ENCODE measurements at regions of chr12 and their contacts with region 1.

Region 1: DNA sequence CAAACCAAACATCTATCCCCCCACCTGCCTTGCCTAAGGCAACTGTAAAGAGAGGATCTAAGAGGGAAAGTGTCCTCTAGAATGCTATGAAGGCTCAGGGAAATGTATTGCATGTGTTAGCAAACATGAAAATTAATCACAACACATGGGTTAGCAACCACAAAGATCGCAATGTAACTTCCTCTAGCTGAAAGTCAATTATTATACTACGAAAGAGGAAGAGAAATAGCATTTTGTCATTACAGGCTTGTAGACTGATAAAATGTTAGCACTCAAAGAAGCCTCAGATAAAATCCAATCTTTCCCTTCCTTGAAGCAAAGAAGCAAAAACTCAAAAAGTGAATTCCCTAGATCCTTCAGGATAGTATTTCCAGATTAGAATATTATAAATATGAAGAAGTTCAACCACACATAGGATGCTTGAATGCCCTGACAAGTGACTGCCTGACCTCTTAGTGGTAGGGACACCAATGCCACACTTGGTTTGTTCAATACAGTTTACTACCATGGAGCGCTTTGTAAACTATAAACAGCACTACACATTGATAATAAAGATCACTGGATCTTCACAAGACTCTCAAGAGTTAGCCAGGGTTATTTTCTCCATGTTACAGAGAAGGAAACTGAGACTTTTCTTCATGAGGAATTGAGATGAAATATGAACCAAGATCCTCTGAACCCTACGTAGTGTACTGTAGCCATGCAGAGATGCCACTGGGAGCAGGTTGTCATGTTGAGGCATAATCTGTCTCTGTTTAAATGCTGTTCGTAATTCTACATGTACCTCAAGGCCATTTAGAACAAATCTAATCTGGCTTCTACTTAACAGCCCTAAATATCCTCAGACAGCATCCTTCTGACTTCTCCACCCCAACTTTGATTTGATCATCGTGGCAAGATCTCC is 100.7 kb downstream of the ITPR2 start:
- DNase-seq: peak; percentile 84
- ATAC-seq: peak; percentile 59
- H3K4me3 ChIP-seq: peak overlapping the region; percentile 13; the same call in 1 of the 2 replicates
- H3K27ac ChIP-seq: peak overlapping the region; percentile 97
- H3K4me1 ChIP-seq: peaks cover 65% of the 10 kb centered on the region
- H3K27me3 ChIP-seq: no peaks in the 10 kb centered on the region
- CTCF ChIP-seq: no peak
- EP300 ChIP-seq: peak; percentile 69 to 89
- POLR2A ChIP-seq: no peak
- RAD21 ChIP-seq: peak; percentile 15; the same call in 1 of the 2 replicates

Region 2: DNA sequence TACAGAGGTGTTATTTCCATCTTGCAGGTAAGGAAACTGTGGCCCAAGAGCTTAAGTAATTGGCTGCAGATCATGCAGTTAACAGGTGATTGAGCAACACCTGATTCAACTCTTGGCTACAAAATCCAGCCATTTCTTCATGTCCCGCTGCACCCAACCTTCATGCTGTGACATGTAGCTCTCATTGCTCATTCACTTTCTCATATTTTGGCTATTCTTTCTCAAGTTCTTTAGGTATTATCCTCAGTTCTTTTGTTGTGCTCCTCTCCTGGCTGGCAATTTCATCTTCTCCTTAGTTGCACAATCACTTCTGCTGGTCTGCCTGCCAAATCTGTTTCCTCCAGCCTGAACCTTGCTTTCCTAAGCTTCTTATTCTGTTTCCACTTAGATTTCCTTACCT is 236.1 kb before region 1 on chr12:
- CTCF ChIA-PET with region 1: no interaction called
- POLR2A ChIA-PET with region 1: no interaction called
- RAD21 ChIA-PET with region 1: no interaction called
- SMC1A ChIA-PET with region 1: no interaction called
- in situ Hi-C with region 1: no loop called
- intact Hi-C with region 1: no loop called
- DNase-seq: no peak
- ATAC-seq: no peak
- H3K4me3 ChIP-seq: no peak overlapping the region
- H3K27ac ChIP-seq: no peak overlapping the region
- H3K4me1 ChIP-seq: no peaks in the 10 kb centered on the region
- H3K27me3 ChIP-seq: no peaks in the 10 kb centered on the region
- CTCF ChIP-seq: no peak
- EP300 ChIP-seq: no peak
- POLR2A ChIP-seq: no peak
- RAD21 ChIP-seq: no peak

Region 3: DNA sequence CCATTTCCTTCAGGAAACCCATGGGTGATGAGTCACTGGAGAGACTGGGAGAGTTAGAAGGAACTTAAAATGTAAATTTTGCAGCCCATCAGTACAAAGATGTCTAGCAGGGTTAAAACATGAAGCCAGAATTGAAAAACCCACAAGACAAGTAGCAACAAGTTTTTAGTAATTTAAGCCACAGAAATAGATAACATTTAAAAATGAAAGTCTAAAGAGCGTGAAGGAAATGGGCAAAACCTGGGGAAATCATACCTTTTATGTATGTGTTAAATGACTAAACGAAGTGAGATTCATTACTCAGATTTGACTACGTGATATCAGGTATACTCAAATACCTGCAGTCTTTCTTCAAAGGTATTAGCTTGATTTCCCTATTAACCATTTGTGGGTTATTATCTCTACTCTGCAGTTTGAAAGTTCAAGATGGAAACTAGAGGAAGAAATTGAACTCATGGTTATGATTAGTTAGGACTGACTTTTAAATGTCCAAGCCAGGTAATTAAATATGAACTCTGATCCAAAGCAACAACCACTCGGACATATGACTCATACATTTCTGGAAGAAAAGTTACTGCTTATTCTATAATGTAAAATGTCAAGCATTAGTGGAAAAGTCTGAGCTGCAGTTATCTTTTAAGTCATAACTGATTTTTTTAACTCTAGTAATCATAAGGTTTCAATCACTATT is 16.6 kb after region 1 on chr12:
- CTCF ChIA-PET with region 1: interaction called, 23 read pairs
- POLR2A ChIA-PET with region 1: interaction called, 14 read pairs
- RAD21 ChIA-PET with region 1: interaction called, 18 read pairs
- SMC1A ChIA-PET with region 1: interaction called, 96 read pairs
- in situ Hi-C with region 1: no loop called
- intact Hi-C with region 1: loop called (anchors 1 kb)
- DNase-seq: peak; percentile 86
- ATAC-seq: peak; percentile 56
- H3K4me3 ChIP-seq: peak overlapping the region; percentile 32; the same call in 1 of the 2 replicates
- H3K27ac ChIP-seq: peak overlapping the region; percentile 91
- H3K4me1 ChIP-seq: peaks cover 64% of the 10 kb centered on the region
- H3K27me3 ChIP-seq: no peaks in the 10 kb centered on the region
- CTCF ChIP-seq: no peak
- EP300 ChIP-seq: peak; percentile 4 to 80
- POLR2A ChIP-seq: no peak
- RAD21 ChIP-seq: no peak

Region 4: GRCh38 chr12:26791301-26791791 is 59.1 kb after region 1 on chr12:
- CTCF ChIA-PET with region 1: no interaction called
- POLR2A ChIA-PET with region 1: no interaction called
- RAD21 ChIA-PET with region 1: interaction called, 6 read pairs
- SMC1A ChIA-PET with region 1: interaction called, 15 read pairs
- in situ Hi-C with region 1: no loop called
- intact Hi-C with region 1: loop called (anchors 5 kb)
- DNase-seq: peak; percentile 54
- ATAC-seq: peak; percentile 88
- H3K4me3 ChIP-seq: no peak overlapping the region
- H3K27ac ChIP-seq: peak overlapping the region; percentile 56
- H3K4me1 ChIP-seq: peaks cover 17% of the 10 kb centered on the region
- H3K27me3 ChIP-seq: no peaks in the 10 kb centered on the region
- CTCF ChIP-seq: no peak
- EP300 ChIP-seq: peak in 1 of 2 experiments; percentile 46; a peak in 1 of 4 replicates
- POLR2A ChIP-seq: no peak
- RAD21 ChIP-seq: no peak

Region 5: DNA sequence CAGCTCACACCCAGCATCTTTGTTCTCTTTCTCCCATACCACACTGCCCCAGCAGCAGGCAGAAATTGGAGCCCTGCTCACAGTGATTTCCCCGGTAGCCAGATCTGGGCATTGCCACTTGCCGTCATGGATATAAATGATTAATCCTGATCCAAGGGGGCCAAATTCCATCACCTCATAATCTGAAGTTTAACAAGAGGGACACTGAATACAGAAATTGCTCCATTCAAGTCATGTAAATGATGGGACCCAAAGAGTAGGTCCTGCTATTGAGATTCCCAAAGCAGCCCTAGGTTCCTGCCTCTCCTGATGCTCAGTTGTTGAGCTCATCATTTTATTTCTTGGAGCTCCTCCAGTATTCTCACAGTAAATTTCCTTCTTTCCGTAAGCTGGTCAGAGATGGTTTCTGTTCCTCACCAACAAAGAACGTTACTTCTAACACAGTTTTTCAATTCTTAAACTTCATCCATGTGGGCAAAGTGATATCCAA is 89.0 kb after region 1 on chr12:
- CTCF ChIA-PET with region 1: interaction called, 3 read pairs
- POLR2A ChIA-PET with region 1: interaction called, 11 read pairs
- RAD21 ChIA-PET with region 1: interaction called, 5 read pairs
- SMC1A ChIA-PET with region 1: interaction called, 6 read pairs
- in situ Hi-C with region 1: no loop called
- intact Hi-C with region 1: no loop called
- DNase-seq: no peak
- ATAC-seq: no peak
- H3K4me3 ChIP-seq: no peak overlapping the region
- H3K27ac ChIP-seq: no peak overlapping the region; the same call in 1 of the 2 replicates
- H3K4me1 ChIP-seq: peaks cover 24% of the 10 kb centered on the region; the same call in 1 of the 2 replicates
- H3K27me3 ChIP-seq: no peaks in the 10 kb centered on the region
- CTCF ChIP-seq: no peak
- EP300 ChIP-seq: no peak
- POLR2A ChIP-seq: no peak
- RAD21 ChIP-seq: no peak